ENCODE measurements at regions of chr3 and their contacts with region 1.

Region 1: DNA sequence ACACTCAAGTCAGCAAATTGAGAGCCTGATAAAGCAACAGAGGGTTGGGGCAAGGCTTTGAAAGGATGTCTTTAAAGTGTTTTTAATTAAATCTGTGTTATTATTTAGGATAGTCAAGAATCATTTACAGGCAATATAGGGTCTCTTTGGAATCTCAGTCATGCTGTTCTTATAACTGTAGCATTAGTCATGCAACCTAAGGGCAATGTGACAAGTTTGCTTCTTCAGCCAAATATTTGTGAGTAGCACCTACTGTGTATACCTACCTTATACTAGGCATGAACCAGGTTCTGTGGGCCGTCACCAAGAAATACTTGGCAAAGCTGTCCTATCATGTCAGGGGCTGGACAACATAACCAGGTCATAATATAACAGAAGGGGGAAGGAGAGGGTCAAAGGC is 184.6 kb upstream of the TRIM42 start:
- DNase-seq: no peak
- H3K4me3 ChIP-seq: no peak overlapping the region
- H3K27ac ChIP-seq: no peak overlapping the region
- H3K4me1 ChIP-seq: peaks cover 7% of the 10 kb centered on the region
- H3K27me3 ChIP-seq: no peaks in the 10 kb centered on the region
- CTCF ChIP-seq: no peak

Region 2: DNA sequence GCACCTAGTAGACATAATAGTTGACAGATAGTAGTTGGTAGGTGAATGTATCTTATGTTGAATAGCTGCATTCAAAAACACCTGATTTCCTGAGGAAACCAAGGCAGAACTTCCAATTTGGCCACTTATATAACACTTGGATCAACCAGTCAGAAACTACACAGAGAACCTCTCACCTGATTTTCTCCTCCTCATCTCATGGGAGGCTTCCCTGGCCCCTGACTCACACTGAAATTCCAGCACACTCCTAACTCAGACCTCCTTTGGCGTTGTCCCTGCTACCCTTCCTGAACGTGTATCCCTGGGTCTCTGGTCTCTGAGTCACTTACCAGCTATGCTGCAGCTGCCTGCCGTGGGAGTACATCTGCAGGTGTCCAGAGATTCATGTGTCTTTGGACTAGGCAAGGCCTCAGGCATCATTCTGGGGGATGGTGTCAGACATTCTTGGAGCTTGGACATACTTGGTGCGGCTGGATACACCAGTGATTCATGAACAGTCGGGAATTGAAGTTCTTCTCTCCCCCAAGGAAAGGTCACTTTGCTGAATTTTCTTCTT is 35.7 kb after region 1 on chr3:
- CTCF ChIA-PET with region 1: no interaction called
- dilution Hi-C with region 1: no loop called
- in situ Hi-C with region 1: no loop called
- intact Hi-C with region 1: loop called (anchors 1 kb)
- DNase-seq: peak; percentile 99
- H3K4me3 ChIP-seq: no peak overlapping the region
- H3K27ac ChIP-seq: peak overlapping the region; percentile 68
- H3K4me1 ChIP-seq: peaks cover 34% of the 10 kb centered on the region
- H3K27me3 ChIP-seq: no peaks in the 10 kb centered on the region
- CTCF ChIP-seq: no peak

Measured in mammary epithelial cell (primary cell).